ENCODE measurements at regions of chr11 and their contacts with region 1.

Region 1: GRCh38 chr11:9015677-9016076 is 11.9 kb upstream of the NRIP3 start:
- DNase-seq: peak; percentile 73
- H3K4me3 Mint-ChIP-seq: no peak overlapping the region
- H3K27ac Mint-ChIP-seq: no peak overlapping the region
- H3K4me1 Mint-ChIP-seq: peaks cover 24% of the 10 kb centered on the region
- H3K27me3 Mint-ChIP-seq: peaks cover 10% of the 10 kb centered on the region

Region 2: DNA sequence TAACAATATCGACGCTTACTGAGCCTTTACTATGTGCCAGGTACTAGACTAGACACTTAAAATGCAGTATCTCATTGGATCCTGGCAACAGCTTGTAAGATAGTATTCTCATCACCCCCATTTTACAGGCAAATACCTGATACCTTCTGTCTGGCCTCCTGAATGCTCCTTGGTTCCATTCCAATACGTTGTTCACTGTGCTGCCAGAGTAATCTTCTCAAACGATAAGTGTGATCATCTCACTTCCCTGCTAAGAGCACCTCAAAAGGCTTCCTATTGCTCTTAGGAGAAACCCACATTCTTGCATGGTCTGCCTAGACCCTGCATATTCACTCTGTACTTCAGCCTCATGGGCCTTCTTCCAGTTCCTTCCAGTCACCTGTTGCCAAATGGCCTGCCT is 10.6 kb before region 1 on chr11:
- CTCF ChIA-PET with region 1: interaction called, 16 read pairs
- DNase-seq: no peak
- H3K4me3 Mint-ChIP-seq: peak overlapping the region; percentile 39
- H3K27ac Mint-ChIP-seq: no peak overlapping the region
- H3K4me1 Mint-ChIP-seq: peaks cover 22% of the 10 kb centered on the region
- H3K27me3 Mint-ChIP-seq: peaks cover 84% of the 10 kb centered on the region

Region 3: DNA sequence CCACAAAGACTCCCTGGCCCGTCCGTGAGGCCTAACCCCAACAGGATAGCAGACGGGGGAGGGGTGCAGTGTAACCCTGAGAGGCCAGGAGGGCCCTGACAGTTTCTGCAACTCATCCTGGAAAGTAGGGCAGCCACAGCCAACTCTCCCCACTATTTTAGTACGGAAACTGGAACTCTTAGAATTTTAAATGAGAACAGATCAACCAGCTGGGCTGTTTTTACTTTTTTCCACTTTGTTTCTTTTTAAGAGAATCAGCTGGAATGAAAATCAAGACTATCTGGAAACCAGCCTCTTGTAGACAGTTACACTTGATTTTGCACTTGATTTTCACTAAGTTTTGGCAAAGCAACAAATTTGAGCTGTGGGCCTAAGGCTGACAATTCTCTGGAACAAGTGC is 30.8 kb after region 1 on chr11:
- CTCF ChIA-PET with region 1: interaction called, 10 read pairs
- DNase-seq: no peak
- H3K4me3 Mint-ChIP-seq: no peak overlapping the region
- H3K27ac Mint-ChIP-seq: no peak overlapping the region
- H3K4me1 Mint-ChIP-seq: no peaks in the 10 kb centered on the region
- H3K27me3 Mint-ChIP-seq: peaks cover 14% of the 10 kb centered on the region

Region 4: GRCh38 chr11:9092853-9093778 is 77.4 kb after region 1 on chr11:
- CTCF ChIA-PET with region 1: interaction called, 49 read pairs
- DNase-seq: no peak
- H3K4me3 Mint-ChIP-seq: no peak overlapping the region
- H3K27ac Mint-ChIP-seq: no peak overlapping the region
- H3K4me1 Mint-ChIP-seq: peaks cover 11% of the 10 kb centered on the region
- H3K27me3 Mint-ChIP-seq: peaks cover 80% of the 10 kb centered on the region

Region 5: GRCh38 chr11:9137293-9138132 is 121.8 kb after region 1 on chr11:
- CTCF ChIA-PET with region 1: interaction called, 158 read pairs
- DNase-seq: peak; percentile 77
- H3K4me3 Mint-ChIP-seq: no peak overlapping the region
- H3K27ac Mint-ChIP-seq: peak overlapping the region; percentile 68
- H3K4me1 Mint-ChIP-seq: peaks cover 26% of the 10 kb centered on the region
- H3K27me3 Mint-ChIP-seq: no peaks in the 10 kb centered on the region